ENCODE measurements at regions of chr2 and their contacts with region 1.

Region 1: DNA sequence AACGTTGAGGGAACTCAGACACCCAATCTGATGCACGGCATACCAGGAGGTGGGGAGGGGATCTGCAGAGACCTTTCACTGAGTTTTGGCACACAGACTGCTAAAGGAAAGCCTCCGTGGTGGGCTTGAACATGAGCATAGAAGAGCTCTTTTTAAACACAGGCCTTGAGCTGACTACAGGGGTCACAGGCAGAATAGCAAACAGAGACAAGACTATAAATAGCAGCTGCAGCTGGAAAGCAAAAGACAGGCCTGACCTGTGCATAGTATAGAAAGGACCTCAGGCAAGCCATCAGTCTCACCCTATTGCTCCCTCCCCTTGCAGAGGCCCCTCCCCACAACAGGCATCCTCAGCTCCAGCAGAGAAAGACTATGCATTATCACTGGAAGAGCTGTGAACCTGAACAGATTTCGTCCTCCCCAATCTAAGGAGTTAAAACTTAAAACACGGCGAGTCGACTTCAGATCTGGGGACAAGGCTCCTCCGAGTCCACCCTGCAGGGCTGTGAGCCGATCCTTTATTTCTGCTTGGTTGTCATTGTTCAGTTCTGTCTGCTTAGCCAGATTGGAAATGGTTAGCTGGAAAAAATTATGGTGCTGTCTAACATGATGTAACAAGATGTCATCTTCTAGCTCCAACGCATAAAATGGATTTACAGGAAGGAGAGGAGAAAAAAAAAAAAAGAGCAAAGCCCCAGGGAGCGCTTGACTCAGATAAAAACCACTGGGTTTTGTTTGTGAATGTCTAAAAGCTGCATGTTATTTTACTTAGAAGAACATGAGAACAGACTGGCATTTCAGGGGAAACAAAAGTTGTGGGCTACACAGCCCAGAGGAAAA is 25.2 kb upstream of the LCLAT1 start:
- DNase-seq: peak; percentile 44
- H3K4me3 Mint-ChIP-seq: peak overlapping the region; percentile 69
- H3K27ac Mint-ChIP-seq: peak overlapping the region; percentile 91
- H3K4me1 Mint-ChIP-seq: peaks cover 41% of the 10 kb centered on the region
- H3K27me3 Mint-ChIP-seq: no peaks in the 10 kb centered on the region

Region 2: GRCh38 chr2:30231212-30231995 is 190.4 kb before region 1 on chr2 and contains the start of gene LBH:
- CTCF ChIA-PET with region 1: interaction called, 4 read pairs
- POLR2A ChIA-PET with region 1: interaction called, 22 read pairs
- intact Hi-C with region 1: loop called (anchors 1 kb)
- DNase-seq: peak; percentile 94
- H3K4me3 Mint-ChIP-seq: peak within 1 kb of the TSS; percentile 84
- H3K27ac Mint-ChIP-seq: peak within 1 kb of the TSS; percentile 94
- H3K4me1 Mint-ChIP-seq: peaks cover 63% of the 10 kb centered on the region
- H3K27me3 Mint-ChIP-seq: no peaks in the 10 kb centered on the region
- total RNA-seq, gene LBH: 109 to 112 TPM

Region 3: GRCh38 chr2:30336978-30337841 is 84.6 kb before region 1 on chr2:
- CTCF ChIA-PET with region 1: no interaction called
- POLR2A ChIA-PET with region 1: interaction called, 13 read pairs
- intact Hi-C with region 1: loop called (anchors 1 kb)
- DNase-seq: peak; percentile 83
- H3K4me3 Mint-ChIP-seq: peak overlapping the region; percentile 68
- H3K27ac Mint-ChIP-seq: peak overlapping the region; percentile 96
- H3K4me1 Mint-ChIP-seq: peaks cover 75% of the 10 kb centered on the region
- H3K27me3 Mint-ChIP-seq: no peaks in the 10 kb centered on the region

Region 4: GRCh38 chr2:30410217-30410616 is 11.6 kb before region 1 on chr2:
- CTCF ChIA-PET with region 1: interaction called, 3 read pairs
- POLR2A ChIA-PET with region 1: interaction called, 5 read pairs
- intact Hi-C with region 1: loop called (anchors 1 kb)
- DNase-seq: peak; percentile 29
- H3K4me3 Mint-ChIP-seq: no peak overlapping the region
- H3K27ac Mint-ChIP-seq: peak overlapping the region; percentile 69
- H3K4me1 Mint-ChIP-seq: peaks cover 37% of the 10 kb centered on the region
- H3K27me3 Mint-ChIP-seq: no peaks in the 10 kb centered on the region

Region 5: GRCh38 chr2:31319406-31320175 is 897.8 kb after region 1 on chr2:
- CTCF ChIA-PET with region 1: interaction called, 3 read pairs
- POLR2A ChIA-PET with region 1: no interaction called
- intact Hi-C with region 1: loop called (anchors 10 kb)
- DNase-seq: peak; percentile 65
- H3K4me3 Mint-ChIP-seq: no peak overlapping the region
- H3K27ac Mint-ChIP-seq: no peak overlapping the region
- H3K4me1 Mint-ChIP-seq: peaks cover 57% of the 10 kb centered on the region
- H3K27me3 Mint-ChIP-seq: no peaks in the 10 kb centered on the region